HCT116 (cell line): ENCODE measurements at regions of chr7 and their contacts with region 1.

Region 1: DNA sequence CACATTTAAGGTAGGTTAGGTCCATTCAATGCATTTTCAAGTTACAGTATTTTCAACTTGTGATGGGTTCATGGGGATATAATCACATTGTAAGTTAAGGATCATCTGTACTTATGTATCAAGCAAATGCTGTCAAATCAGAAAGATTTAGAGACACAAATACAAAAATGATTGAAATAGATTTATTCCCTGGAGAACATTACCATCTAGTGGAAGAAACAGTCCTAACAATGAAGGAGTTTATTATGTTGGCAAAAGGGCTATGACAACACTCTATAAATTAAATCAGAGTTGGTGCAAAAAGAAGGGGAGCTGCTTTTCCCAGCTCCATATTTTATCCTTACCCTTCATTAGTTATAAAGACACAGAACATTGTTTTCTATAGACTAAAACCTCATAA is 69.0 kb downstream of the PRSS58 start:
- DNase-seq: peak; percentile 16
- ATAC-seq: peak; percentile 40; the same call in 1 of the 2 replicates
- H3K4me3 ChIP-seq: no peak overlapping the region
- H3K27ac ChIP-seq: no peak overlapping the region
- H3K4me1 ChIP-seq: no peaks in the 10 kb centered on the region
- H3K27me3 ChIP-seq: peaks cover 5% of the 10 kb centered on the region
- CTCF ChIP-seq: peak; percentile 5 to 50 (median 48); a peak in 3 of 6 replicates
- POLR2A ChIP-seq: no peak
- RAD21 ChIP-seq: peak; percentile 76

Region 2: GRCh38 chr7:141754939-141755338 is 433.9 kb before region 1 on chr7:
- CTCF ChIA-PET with region 1: no interaction called
- POLR2A ChIA-PET with region 1: no interaction called
- RAD21 ChIA-PET with region 1: no interaction called
- intact Hi-C with region 1: loop called (anchors 5 kb)
- DNase-seq: no peak
- ATAC-seq: peak; percentile 75
- H3K4me3 ChIP-seq: no peak overlapping the region
- H3K27ac ChIP-seq: no peak overlapping the region
- H3K4me1 ChIP-seq: no peaks in the 10 kb centered on the region
- H3K27me3 ChIP-seq: no peaks in the 10 kb centered on the region
- CTCF ChIP-seq: peak; percentile 11 to 67 (median 56); a peak in 4 of 6 replicates
- POLR2A ChIP-seq: no peak
- RAD21 ChIP-seq: peak; percentile 35

Region 3: GRCh38 chr7:141975806-141976523 is 212.9 kb before region 1 on chr7:
- CTCF ChIA-PET with region 1: interaction called, 36 read pairs
- POLR2A ChIA-PET with region 1: no interaction called
- RAD21 ChIA-PET with region 1: interaction called in 1 of 2 experiments, 3 read pairs
- intact Hi-C with region 1: loop called (anchors 1 kb)
- DNase-seq: peak; percentile 60
- ATAC-seq: peak; percentile 96
- H3K4me3 ChIP-seq: peak overlapping the region; percentile 17 to 30
- H3K27ac ChIP-seq: no peak overlapping the region
- H3K4me1 ChIP-seq: peaks cover 0 to 5% of the 10 kb centered on the region in 2 experiments; a peak in 2 of 4 replicates
- H3K27me3 ChIP-seq: no peaks in the 10 kb centered on the region
- CTCF ChIP-seq: peak; percentile 78 to 98 (median 92)
- POLR2A ChIP-seq: no peak
- RAD21 ChIP-seq: peak; percentile 93

Region 4: DNA sequence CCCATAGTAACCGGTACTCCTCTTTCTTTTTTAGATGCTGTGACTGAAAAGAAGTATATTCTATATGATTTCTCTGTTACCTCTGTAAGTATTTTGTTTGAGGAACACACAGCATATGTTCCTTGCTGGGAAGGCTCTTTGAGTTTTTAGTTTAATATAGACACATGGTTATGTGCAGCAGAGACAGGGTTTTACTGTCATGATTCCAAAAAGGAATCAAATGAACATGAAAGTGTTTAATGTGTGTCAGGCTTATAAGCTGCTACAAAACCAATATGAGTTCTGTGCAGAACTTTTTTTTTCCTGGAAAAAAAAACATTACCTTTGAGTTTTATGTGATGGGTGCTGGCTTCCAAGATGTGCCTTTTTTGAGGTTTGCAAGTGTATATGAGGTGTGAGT is 26.9 kb before region 1 on chr7:
- CTCF ChIA-PET with region 1: no interaction called
- POLR2A ChIA-PET with region 1: no interaction called
- RAD21 ChIA-PET with region 1: no interaction called
- intact Hi-C with region 1: loop called (anchors 2 kb)
- DNase-seq: no peak
- ATAC-seq: no peak
- H3K4me3 ChIP-seq: no peak overlapping the region
- H3K27ac ChIP-seq: no peak overlapping the region
- H3K4me1 ChIP-seq: no peaks in the 10 kb centered on the region
- H3K27me3 ChIP-seq: no peaks in the 10 kb centered on the region; the same call in 1 of the 2 replicates
- CTCF ChIP-seq: no peak
- POLR2A ChIP-seq: no peak
- RAD21 ChIP-seq: no peak